Head of caudate nucleus (tissue), 42 donors: ENCODE measurements at regions of chr2 and their contacts with region 1.

Region 1: GRCh38 chr2:203238704-203239526 is at the start of gene CYP20A1:
- DNase-seq: peak; percentile 86 to 97 (median 95)

Region 2: DNA sequence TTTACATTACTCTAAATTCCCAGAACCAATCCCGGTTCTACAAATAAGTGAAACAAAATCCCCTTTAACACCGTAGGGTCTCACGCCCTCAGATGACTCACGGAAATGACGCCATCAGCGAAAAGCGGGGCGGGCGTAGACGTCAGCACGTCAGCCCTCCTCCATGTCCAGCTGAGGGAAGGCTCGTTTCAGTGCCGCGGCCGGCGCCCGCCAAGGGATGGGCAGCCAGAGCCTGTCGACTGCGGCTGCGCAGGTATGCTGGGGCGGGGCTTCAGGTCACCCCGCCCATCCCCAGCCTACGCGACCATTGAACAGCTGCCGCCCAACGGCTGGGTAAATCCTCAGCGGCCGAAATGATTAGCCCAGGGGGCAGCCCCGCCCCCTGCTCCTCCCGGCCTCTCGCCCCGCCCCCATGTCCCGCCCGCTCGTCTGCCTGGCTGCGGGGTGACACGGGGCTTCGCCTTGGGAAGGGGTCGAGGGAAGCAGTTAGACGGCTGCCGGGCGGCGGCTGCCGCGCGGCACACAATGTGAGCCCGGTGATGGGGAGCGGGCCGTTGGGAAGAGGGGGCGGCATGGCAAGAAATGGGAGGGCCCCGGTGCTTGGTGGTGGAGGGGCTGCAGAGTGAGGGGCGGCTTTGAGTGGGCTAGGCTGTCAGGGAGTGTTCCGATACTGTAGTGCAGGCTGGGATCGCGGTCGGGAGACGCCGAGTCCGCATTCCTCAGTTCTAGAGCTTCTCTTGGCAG is 224.3 kb before region 1 on chr2 and contains the start of gene NBEAL1:
- intact Hi-C with region 1: loop called (anchors 10 kb)
- DNase-seq: peak; percentile 96 to 99 (median 98)

Region 3: GRCh38 chr2:203164311-203164935 is 74.5 kb before region 1 on chr2:
- intact Hi-C with region 1: no loop called
- DNase-seq: no peak

Region 4: DNA sequence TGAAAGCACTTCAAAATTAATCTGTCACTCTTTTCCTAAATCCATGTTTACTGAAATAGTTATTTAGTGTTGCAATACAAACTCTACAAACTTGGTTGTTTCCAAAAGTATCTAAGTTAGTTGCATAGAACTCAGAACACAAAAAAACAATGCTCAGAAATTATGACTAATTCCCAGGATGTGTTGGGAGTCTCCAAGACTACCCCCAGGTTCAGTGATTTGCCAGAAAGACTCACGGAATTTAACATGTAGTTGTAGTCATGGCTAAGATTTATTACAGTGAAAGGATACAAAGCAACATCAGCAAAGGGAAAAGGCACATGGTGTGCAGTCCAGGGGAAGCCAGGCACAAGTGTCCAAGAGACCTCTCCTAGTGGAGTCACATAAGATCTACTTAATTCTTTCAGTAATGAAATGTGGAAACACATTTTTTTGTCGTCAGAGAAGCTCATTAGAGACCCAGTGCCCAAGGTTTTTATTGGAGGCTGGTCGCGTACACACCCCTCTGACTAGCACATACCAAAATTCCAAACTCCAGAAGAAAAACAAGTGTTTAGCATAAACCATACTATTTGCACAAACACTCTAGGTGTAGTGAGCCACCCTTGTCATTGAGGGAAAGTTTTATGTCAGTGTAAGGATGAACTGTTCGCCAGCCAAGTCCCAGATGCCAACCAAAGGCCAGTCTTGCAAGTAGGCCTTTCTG is 43.4 kb before region 1 on chr2:
- intact Hi-C with region 1: no loop called
- DNase-seq: no peak

Region 5: GRCh38 chr2:203327901-203328759 is 89.2 kb after region 1 on chr2 and contains the start of gene ABI2:
- intact Hi-C with region 1: loop called (anchors 5 kb)
- DNase-seq: peak; percentile 58 to 95 (median 89)

Region 6: GRCh38 chr2:203453858-203454451 is 215.0 kb after region 1 on chr2:
- intact Hi-C with region 1: loop called (anchors 10 kb)
- DNase-seq: peak in 17 of 42 donors; percentile 18 to 76 (median 48)